HepG2 (cell line): ENCODE measurements at regions of chr2 and their contacts with region 1.

Region 1: GRCh38 chr2:135997380-135997779 is 12.0 kb upstream of the DARS1 start:
- DNase-seq: peak; percentile 53
- ATAC-seq: peak; percentile 99
- H3K4me3 ChIP-seq: no peak overlapping the region
- H3K27ac ChIP-seq: no peak overlapping the region
- H3K4me1 ChIP-seq: no peaks in the 10 kb centered on the region
- H3K27me3 ChIP-seq: no peaks in the 10 kb centered on the region
- CTCF ChIP-seq: peak; percentile 74
- EP300 ChIP-seq: no peak
- POLR2A ChIP-seq: no peak
- RAD21 ChIP-seq: peak; percentile 39; the same call in 1 of the 2 replicates

Region 2: GRCh38 chr2:136378712-136379595 is 381.6 kb after region 1 on chr2:
- CTCF ChIA-PET with region 1: interaction called, 11 read pairs
- POLR2A ChIA-PET with region 1: no interaction called
- in situ Hi-C with region 1: loop called (anchors 10 kb)
- intact Hi-C with region 1: loop called (anchors 1 kb)
- DNase-seq: peak; percentile 35
- ATAC-seq: peak; percentile 89
- H3K4me3 ChIP-seq: no peak overlapping the region
- H3K27ac ChIP-seq: no peak overlapping the region
- H3K4me1 ChIP-seq: no peaks in the 10 kb centered on the region
- H3K27me3 ChIP-seq: peaks cover 0 to 3% of the 10 kb centered on the region in 2 experiments; a peak in 1 of 5 replicates
- CTCF ChIP-seq: peak; percentile 84
- EP300 ChIP-seq: no peak
- POLR2A ChIP-seq: no peak
- RAD21 ChIP-seq: peak; percentile 77

Region 3: GRCh38 chr2:137007905-137008399 is 1010.6 kb after region 1 on chr2:
- CTCF ChIA-PET with region 1: no interaction called
- POLR2A ChIA-PET with region 1: no interaction called
- in situ Hi-C with region 1: no loop called
- intact Hi-C with region 1: no loop called
- DNase-seq: no peak
- ATAC-seq: no peak
- H3K4me3 ChIP-seq: no peak overlapping the region
- H3K27ac ChIP-seq: no peak overlapping the region
- H3K4me1 ChIP-seq: no peaks in the 10 kb centered on the region
- H3K27me3 ChIP-seq: no peaks in the 10 kb centered on the region
- CTCF ChIP-seq: no peak
- EP300 ChIP-seq: no peak
- POLR2A ChIP-seq: no peak
- RAD21 ChIP-seq: no peak